A673 (cell line): ENCODE measurements at regions of chr9 and their contacts with region 1.

Region 1: GRCh38 chr9:73081979-73082657 is 69.5 kb upstream of the ANXA1 start:
- DNase-seq: peak; percentile 80
- H3K4me3 ChIP-seq: no peak overlapping the region
- H3K27ac ChIP-seq: no peak overlapping the region
- H3K4me1 ChIP-seq: peaks cover 4% of the 10 kb centered on the region
- H3K27me3 ChIP-seq: no peaks in the 10 kb centered on the region
- CTCF ChIP-seq: peak; percentile 84

Region 2: GRCh38 chr9:72856972-72857623 is 225.0 kb before region 1 on chr9:
- CTCF ChIA-PET with region 1: interaction called, 9 read pairs
- POLR2A ChIA-PET with region 1: no interaction called
- intact Hi-C with region 1: loop called (anchors 2 kb)
- DNase-seq: peak; percentile 84
- H3K4me3 ChIP-seq: no peak overlapping the region
- H3K27ac ChIP-seq: no peak overlapping the region
- H3K4me1 ChIP-seq: peaks cover 17% of the 10 kb centered on the region
- H3K27me3 ChIP-seq: no peaks in the 10 kb centered on the region
- CTCF ChIP-seq: peak; percentile 80

Region 3: DNA sequence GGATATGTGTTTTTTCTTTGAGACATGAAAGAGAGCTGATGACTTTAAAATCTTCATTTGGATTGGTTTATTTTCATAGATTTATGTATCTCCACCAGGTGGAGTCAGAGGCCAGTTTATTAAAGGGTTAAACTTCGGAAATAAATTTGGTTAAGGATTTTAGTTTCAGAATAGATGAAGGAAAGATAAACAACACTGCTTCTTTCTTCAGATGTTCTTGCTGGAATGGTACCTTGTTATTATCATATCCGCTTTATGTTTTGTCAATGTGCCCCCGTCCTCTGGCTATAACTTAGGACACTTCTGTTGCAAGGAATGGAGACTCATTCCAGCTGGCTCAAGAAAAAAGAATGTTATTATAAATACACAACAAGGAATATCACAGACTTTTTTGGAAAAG is 210.4 kb before region 1 on chr9:
- CTCF ChIA-PET with region 1: no interaction called
- POLR2A ChIA-PET with region 1: no interaction called
- intact Hi-C with region 1: loop called (anchors 1 kb)
- DNase-seq: peak; percentile 56
- H3K4me3 ChIP-seq: no peak overlapping the region
- H3K27ac ChIP-seq: no peak overlapping the region
- H3K4me1 ChIP-seq: peaks cover 6% of the 10 kb centered on the region
- H3K27me3 ChIP-seq: no peaks in the 10 kb centered on the region
- CTCF ChIP-seq: peak; percentile 67